ENCODE measurements at regions of chr7 and their contacts with region 1.

Region 1: GRCh38 chr7:6589829-6590644 is at the start of gene INTS15:
- DNase-seq: peak; percentile 75 to 81
- H3K4me3 ChIP-seq: peak within 1 kb of the TSS; percentile 45 to 91 (median 72)
- H3K27ac ChIP-seq: peak within 1 kb of the TSS; percentile 10 to 81 (median 47)
- H3K4me1 ChIP-seq: peaks cover 0 to 8% of the 10 kb centered on the region in 2 donors
- H3K27me3 ChIP-seq: no peaks in the 10 kb centered on the region
- CTCF ChIP-seq: peak in 5 of 6 experiments; percentile 22 to 99 (median 95)
- POLR2A ChIP-seq: peak in 1 of 2 donors; percentile 79
- total RNA-seq, gene INTS15: 22.7 to 42.9 (median 31.9) TPM

Region 2: DNA sequence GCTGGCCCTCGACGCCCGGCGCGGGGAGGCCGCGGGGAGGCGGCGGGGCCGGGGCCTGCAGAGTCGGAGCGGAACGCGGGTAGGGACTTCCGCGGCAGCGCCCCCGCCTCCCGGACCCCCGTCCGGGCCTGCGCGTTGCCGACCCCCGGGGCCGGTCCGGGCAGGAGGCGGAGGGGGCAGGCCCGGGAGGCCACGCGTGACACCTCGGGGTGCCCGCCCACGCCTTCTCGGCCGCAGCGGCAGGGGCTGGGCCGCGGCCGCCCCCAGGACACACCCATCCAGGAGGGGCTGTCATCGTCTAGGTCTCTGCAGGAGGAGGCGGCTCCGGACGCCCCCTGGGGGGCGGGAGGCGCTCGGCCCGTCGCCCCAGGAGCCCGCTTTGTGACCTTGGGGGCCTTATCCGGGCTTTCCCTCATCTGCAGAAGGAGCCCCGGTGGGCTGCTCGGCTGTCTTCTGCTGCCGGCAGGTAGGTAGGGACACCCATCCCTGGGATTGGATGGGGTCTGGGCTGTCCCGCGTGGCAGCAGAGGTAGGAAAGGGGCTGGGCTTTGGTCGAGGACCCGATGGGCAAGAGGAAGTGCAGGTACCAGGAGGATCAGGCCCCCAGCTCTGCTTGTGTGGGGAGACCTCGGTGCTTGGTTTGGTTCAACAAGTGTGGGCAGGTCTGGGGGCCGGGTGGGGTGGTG is 47.6 kb after region 1 on chr7:
- intact Hi-C with region 1: loop called (anchors 5 kb)
- DNase-seq: peak; percentile 30 to 36
- H3K4me3 ChIP-seq: peak overlapping the region; percentile 42 to 85 (median 75)
- H3K27ac ChIP-seq: peak overlapping the region in 2 of 3 donors; percentile 51 to 57
- H3K4me1 ChIP-seq: peaks cover 20 to 35% of the 10 kb centered on the region in 2 donors
- H3K27me3 ChIP-seq: no peaks in the 10 kb centered on the region
- CTCF ChIP-seq: peak in 3 of 6 experiments; percentile 5 to 14 (median 9)
- POLR2A ChIP-seq: no peak

Region 3: GRCh38 chr7:6706677-6707544 is 116.9 kb after region 1 on chr7 and contains the start of gene ZNF12:
- intact Hi-C with region 1: loop called (anchors 10 kb)
- DNase-seq: peak; percentile 97 to 98
- H3K4me3 ChIP-seq: peak within 1 kb of the TSS; percentile 81 to 98 (median 88)
- H3K27ac ChIP-seq: peak within 1 kb of the TSS; percentile 37 to 80 (median 61)
- H3K4me1 ChIP-seq: peaks cover 18 to 24% of the 10 kb centered on the region in 2 donors
- H3K27me3 ChIP-seq: no peaks in the 10 kb centered on the region
- CTCF ChIP-seq: no peak
- POLR2A ChIP-seq: peak in 1 of 2 donors; percentile 76
- total RNA-seq, gene ZNF12: 29.2 to 43.9 (median 31.4) TPM